Dendritic cell treated with granulocyte-macrophage colony-stimulating factor and Interleukin-4, amounts not matched to agents 40 ng/mL and 50 ng/mL, for 4 days (primary cell): ENCODE measurements at regions of chr4 and their contacts with region 1.

Region 1: DNA sequence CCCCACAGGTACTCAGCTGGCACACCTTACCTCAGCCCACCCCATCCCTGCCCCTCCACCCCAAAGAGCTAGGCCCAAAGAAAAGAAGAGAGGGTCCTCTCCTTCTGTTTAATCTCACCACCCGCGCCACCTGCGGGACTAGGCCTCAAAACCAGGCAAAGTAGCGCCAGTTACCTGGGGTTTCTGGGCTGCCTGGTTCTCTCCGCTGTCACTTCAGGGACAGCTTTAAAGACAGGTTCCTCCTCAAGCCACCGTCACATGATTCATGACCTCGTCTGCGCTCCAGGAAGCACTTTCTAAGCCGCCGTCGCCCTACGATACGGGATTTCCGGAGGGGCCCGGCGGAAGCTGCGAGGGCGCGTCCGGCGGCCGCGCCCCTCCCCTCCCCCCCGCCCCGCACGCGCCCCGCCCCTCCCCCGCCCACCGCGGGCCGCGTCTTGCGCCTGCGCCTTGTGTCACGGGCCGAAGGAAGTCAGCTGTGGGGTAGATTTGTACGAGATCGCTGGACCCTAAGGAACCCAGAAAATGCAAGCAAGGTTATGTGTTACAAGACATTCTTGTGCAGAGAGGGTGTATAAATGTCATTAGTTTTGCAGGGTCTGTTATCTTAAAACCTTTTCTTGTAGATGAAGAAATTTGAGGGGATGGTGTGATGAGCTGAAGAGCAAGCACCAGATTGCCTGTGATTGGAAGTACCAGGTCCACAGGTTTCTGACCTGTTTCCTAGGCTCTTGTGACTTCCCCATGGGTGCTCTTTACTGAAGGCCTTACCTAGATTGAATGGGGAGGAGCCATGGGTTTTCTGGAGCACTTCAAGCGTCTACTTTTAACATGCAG is at the start of gene LAMTOR3:
- H3K4me3 Mint-ChIP-seq: peak within 1 kb of the TSS; percentile 97
- H3K27ac Mint-ChIP-seq: peak within 1 kb of the TSS; percentile 96
- H3K4me1 Mint-ChIP-seq: peaks cover 31% of the 10 kb centered on the region
- H3K27me3 Mint-ChIP-seq: no peaks in the 10 kb centered on the region

Region 2: DNA sequence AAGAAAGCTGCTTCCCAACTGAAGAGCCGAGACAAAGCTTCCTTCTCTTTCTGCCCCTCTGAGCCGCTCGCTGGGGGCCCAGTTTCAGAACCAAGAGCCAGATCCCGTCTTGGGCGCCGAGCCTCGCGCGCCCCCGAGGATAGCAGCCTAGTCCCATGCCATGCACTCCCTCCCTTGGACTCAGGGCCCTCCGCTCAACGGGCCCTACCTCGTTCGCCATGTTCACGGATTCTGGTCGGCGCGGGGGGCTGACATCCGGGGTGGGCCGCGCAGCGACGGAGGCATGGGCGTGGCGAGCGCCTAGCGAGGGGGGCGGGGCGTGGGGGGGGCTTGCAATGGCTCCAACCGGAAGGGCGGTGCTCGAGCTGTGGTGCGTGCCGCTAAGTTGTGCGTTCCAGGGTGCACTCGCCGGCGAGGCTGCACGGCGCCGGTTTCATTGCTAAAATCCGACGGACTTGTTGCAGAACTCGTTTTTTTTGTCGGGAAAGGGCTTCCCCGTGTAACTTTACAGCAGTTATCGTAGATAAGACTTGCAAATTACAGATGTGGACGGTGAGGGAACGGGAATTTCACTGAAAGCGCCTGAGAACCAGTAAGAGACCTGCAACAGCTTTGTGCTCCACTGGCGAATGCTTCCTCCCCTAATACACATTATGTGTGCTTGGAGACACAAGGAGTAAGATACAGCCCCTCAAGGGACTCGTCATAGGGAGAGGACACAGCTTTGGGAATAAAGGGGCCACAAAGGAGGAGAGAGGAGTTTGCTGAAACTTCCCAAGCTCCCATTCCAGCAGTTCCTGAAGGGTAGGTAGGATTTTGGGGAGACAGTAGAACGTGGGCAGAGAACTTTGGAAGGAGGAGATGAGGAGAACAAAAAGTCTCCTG is 805.7 kb before region 1 on chr4 and contains the start of gene ADH5:
- intact Hi-C with region 1: loop called (anchors 5 kb)
- H3K4me3 Mint-ChIP-seq: peak within 1 kb of the TSS; percentile 89
- H3K27ac Mint-ChIP-seq: peak within 1 kb of the TSS; percentile 93
- H3K4me1 Mint-ChIP-seq: peaks cover 47% of the 10 kb centered on the region
- H3K27me3 Mint-ChIP-seq: peaks cover 2% of the 10 kb centered on the region

Region 3: GRCh38 chr4:99610605-99611175 is 283.7 kb before region 1 on chr4:
- intact Hi-C with region 1: no loop called
- H3K4me3 Mint-ChIP-seq: no peak overlapping the region
- H3K27ac Mint-ChIP-seq: no peak overlapping the region
- H3K4me1 Mint-ChIP-seq: no peaks in the 10 kb centered on the region
- H3K27me3 Mint-ChIP-seq: no peaks in the 10 kb centered on the region

Region 4: GRCh38 chr4:99715286-99715685 is 179.1 kb before region 1 on chr4:
- intact Hi-C with region 1: no loop called
- H3K4me3 Mint-ChIP-seq: no peak overlapping the region
- H3K27ac Mint-ChIP-seq: no peak overlapping the region
- H3K4me1 Mint-ChIP-seq: no peaks in the 10 kb centered on the region
- H3K27me3 Mint-ChIP-seq: no peaks in the 10 kb centered on the region

Region 5: GRCh38 chr4:99855678-99856077 is 38.7 kb before region 1 on chr4:
- intact Hi-C with region 1: loop called (anchors 5 kb)
- H3K4me3 Mint-ChIP-seq: no peak overlapping the region
- H3K27ac Mint-ChIP-seq: peak overlapping the region; percentile 81
- H3K4me1 Mint-ChIP-seq: peaks cover 63% of the 10 kb centered on the region
- H3K27me3 Mint-ChIP-seq: no peaks in the 10 kb centered on the region